ENCODE measurements at regions of chr2 and their contacts with region 1.

Region 1: GRCh38 chr2:88880441-88880953 is 189.0 kb downstream of the RPIA start:
- DNase-seq: peak; percentile 84 to 90 (median 88)
- H3K4me3 ChIP-seq: peak overlapping the region in 6 of 7 experiments; percentile 40 to 77 (median 61)
- H3K27ac ChIP-seq: no peak overlapping the region
- H3K4me1 ChIP-seq: peaks cover 9 to 20% (median 12%) of the 10 kb centered on the region in 4 experiments
- H3K27me3 ChIP-seq: no peaks in the 10 kb centered on the region

Region 2: GRCh38 chr2:88680266-88680902 is 200.1 kb before region 1 on chr2:
- CTCF ChIA-PET with region 1: no interaction called
- POLR2A ChIA-PET with region 1: no interaction called
- DNase-seq: peak in 1 of 3 donors; percentile 21
- H3K4me3 ChIP-seq: no peak overlapping the region
- H3K27ac ChIP-seq: no peak overlapping the region
- H3K4me1 ChIP-seq: no peaks in the 10 kb centered on the region
- H3K27me3 ChIP-seq: no peaks in the 10 kb centered on the region

Region 3: DNA sequence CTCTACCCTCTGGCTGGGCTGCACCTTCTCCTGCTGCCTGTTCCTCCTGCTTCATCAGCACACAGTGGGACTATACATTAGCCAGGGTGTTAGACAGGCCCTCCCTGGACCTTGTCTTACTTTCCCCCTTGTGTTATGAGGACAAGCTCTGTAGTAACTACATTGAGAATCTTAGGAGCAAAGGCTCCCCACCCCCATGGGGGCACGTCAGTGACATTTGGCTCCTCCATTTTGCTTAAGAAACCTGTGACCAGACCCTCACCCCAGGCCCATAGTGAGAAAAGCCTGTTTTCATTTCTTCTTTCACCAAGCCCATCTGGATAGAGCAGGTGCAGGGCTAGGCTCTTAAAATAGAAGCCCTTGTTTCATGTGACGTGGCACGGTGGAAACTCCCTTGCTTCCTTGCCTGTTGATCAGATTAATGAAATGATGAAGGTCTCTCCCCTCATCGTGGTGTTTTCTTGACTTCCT is 42.3 kb before region 1 on chr2:
- CTCF ChIA-PET with region 1: interaction called, 71 read pairs
- POLR2A ChIA-PET with region 1: no interaction called
- DNase-seq: peak; percentile 32 to 69 (median 58)
- H3K4me3 ChIP-seq: no peak overlapping the region
- H3K27ac ChIP-seq: no peak overlapping the region
- H3K4me1 ChIP-seq: peaks cover 0 to 21% (median 2%) of the 10 kb centered on the region in 4 experiments
- H3K27me3 ChIP-seq: no peaks in the 10 kb centered on the region

Region 4: GRCh38 chr2:88892207-88892606 is 11.7 kb after region 1 on chr2:
- CTCF ChIA-PET with region 1: interaction called, 37 read pairs
- POLR2A ChIA-PET with region 1: no interaction called
- DNase-seq: no peak
- H3K4me3 ChIP-seq: no peak overlapping the region
- H3K27ac ChIP-seq: no peak overlapping the region
- H3K4me1 ChIP-seq: peaks cover 0 to 19% (median 5%) of the 10 kb centered on the region in 4 experiments
- H3K27me3 ChIP-seq: no peaks in the 10 kb centered on the region

Region 5: GRCh38 chr2:88903749-88904353 is 23.4 kb after region 1 on chr2:
- CTCF ChIA-PET with region 1: interaction called, 37 read pairs
- POLR2A ChIA-PET with region 1: no interaction called
- DNase-seq: peak; percentile 50 to 71 (median 69)
- H3K4me3 ChIP-seq: no peak overlapping the region
- H3K27ac ChIP-seq: no peak overlapping the region
- H3K4me1 ChIP-seq: no peaks in the 10 kb centered on the region
- H3K27me3 ChIP-seq: no peaks in the 10 kb centered on the region

Measured in common myeloid progenitor, CD34-positive (primary cell).